ENCODE measurements at regions of chr1 and their contacts with region 1.

Region 1: DNA sequence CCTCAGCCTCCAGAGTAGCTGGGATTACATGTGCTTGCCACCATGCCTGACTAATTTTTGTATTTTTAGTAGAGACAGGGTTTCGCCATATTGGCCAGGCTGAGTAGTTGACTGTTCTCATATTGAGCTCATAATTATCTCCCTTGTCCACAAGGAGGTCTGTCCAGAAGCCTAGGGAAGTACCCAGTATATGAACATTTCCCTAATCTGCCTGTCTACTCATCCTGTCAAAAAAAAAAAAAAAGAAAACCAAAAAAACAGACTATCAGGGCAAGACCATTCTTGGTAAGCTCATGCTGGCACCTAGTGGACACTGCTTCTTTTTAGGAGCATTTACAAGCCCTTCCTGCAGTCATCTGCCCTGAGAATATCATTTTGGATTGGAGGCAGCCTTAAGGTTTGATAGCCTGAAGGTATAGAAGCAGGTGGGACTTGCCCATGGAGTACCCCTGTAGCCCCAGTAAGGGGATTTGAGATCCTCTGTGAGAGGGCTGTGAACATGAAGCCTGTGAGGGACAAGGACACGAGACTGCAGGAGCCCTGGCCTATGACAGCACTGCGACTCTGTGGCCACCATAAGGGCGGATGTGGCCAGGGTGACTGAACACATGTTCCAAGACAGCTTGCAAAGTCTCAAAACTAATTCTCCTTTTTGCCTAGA is 10.8 kb upstream of the DUSP12 start:
- DNase-seq: peak in 10 of 14 experiments; percentile 11 to 85 (median 33)
- ATAC-seq: peak; percentile 68
- H3K4me3 ChIP-seq: no peak overlapping the region
- H3K4me3 Mint-ChIP-seq: no peak overlapping the region
- H3K27ac ChIP-seq: no peak overlapping the region
- H3K27ac Mint-ChIP-seq: no peak overlapping the region
- H3K4me1 ChIP-seq: peaks cover 19% of the 10 kb centered on the region
- H3K4me1 Mint-ChIP-seq: peaks cover 20% of the 10 kb centered on the region
- H3K27me3 ChIP-seq: no peaks in the 10 kb centered on the region
- H3K27me3 Mint-ChIP-seq: peaks cover 22% of the 10 kb centered on the region
- CTCF ChIP-seq: peak; percentile 51

Region 2: GRCh38 chr1:161631076-161631475 is 107.7 kb before region 1 on chr1 and contains the start of gene FCGR3B:
- CTCF ChIA-PET with region 1: no interaction called
- POLR2A ChIA-PET with region 1: no interaction called
- intact Hi-C with region 1: no loop called
- DNase-seq: no peak
- ATAC-seq: no peak
- H3K4me3 ChIP-seq: no peak within 1 kb of the TSS
- H3K4me3 Mint-ChIP-seq: no peak within 1 kb of the TSS
- H3K27ac ChIP-seq: no peak within 1 kb of the TSS
- H3K27ac Mint-ChIP-seq: no peak within 1 kb of the TSS
- H3K4me1 ChIP-seq: peaks cover 6% of the 10 kb centered on the region
- H3K4me1 Mint-ChIP-seq: peaks cover 6% of the 10 kb centered on the region
- H3K27me3 ChIP-seq: no peaks in the 10 kb centered on the region
- H3K27me3 Mint-ChIP-seq: no peaks in the 10 kb centered on the region
- CTCF ChIP-seq: no peak
- total RNA-seq, gene FCGR3B: not detected

Region 3: DNA sequence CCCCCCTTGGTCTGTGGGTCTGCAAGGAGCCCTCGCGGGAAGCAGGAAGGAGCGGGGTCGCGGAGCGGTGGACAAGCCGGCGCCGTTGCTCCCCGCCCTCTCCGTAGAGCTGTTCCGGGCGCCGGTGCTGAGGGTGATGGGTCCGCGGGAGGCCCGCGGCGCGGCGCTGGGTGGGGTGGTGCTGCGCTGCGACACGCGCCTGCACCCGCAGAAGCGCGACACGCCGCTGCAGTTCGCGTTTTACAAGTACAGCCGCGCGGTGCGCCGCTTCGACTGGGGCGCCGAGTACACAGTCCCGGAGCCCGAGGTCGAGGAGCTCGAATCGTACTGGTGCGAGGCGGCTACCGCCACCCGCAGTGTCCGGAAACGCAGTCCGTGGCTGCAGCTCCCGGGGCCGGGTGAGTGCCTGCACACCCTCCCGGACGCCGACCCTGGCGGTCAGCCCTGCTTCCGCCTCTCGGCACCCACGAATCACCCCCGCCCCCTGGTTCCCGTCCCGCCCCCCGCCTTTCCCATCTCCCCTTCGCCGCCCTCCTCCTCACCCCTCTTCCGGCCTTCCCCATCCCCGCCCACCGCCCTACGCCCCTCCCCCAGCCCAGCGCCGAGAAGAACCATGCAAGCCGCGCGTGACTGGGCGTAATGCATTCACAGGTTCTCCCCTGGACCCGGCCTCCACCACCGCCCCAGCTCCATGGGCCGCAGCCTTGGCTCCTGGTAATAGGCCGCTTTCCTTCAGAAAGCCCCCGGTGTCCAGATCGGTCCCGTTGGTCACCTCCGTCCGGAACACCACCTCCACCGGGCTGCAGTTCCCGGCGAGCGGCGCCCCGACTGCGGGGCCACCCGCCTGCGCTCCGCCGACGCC is 11.9 kb before region 1 on chr1:
- CTCF ChIA-PET with region 1: interaction called, 11 read pairs
- POLR2A ChIA-PET with region 1: interaction called, 38 read pairs
- intact Hi-C with region 1: loop called in 1 of 2 experiments (anchors 2 kb)
- DNase-seq: peak; percentile 47 to 88 (median 67)
- ATAC-seq: peak; percentile 61
- H3K4me3 ChIP-seq: peak overlapping the region; percentile 80
- H3K4me3 Mint-ChIP-seq: peak overlapping the region; percentile 94
- H3K27ac ChIP-seq: peak overlapping the region; percentile 40 to 60
- H3K27ac Mint-ChIP-seq: peak overlapping the region; percentile 79
- H3K4me1 ChIP-seq: peaks cover 33% of the 10 kb centered on the region
- H3K4me1 Mint-ChIP-seq: peaks cover 37% of the 10 kb centered on the region
- H3K27me3 ChIP-seq: peaks cover 0 to 3% of the 10 kb centered on the region in 2 experiments
- H3K27me3 Mint-ChIP-seq: peaks cover 22% of the 10 kb centered on the region
- CTCF ChIP-seq: no peak

Region 4: DNA sequence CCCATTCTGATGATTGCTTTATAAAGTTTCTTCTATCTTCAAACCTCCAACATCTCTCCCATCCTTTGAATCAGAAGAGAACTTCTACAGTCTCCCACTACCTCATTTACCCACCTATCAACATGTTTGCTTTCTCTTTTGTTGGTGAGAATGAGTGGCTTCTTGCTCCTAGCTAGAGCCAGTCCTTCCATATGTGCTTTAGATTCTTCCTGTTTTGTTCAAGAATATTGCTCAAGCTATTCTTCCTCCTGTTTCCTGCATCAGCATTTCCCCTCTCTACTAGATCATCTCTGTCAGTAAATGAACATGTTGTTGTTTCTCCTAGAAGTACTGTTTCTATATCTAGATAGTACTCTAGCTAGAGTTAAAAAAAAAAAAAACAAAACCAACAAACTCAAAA is 33.6 kb after region 1 on chr1:
- CTCF ChIA-PET with region 1: no interaction called
- POLR2A ChIA-PET with region 1: no interaction called
- intact Hi-C with region 1: no loop called
- DNase-seq: peak in 2 of 14 experiments; percentile 19 to 26
- ATAC-seq: peak; percentile 37
- H3K4me3 ChIP-seq: peak overlapping the region; percentile 1
- H3K4me3 Mint-ChIP-seq: no peak overlapping the region
- H3K27ac ChIP-seq: peak overlapping the region; percentile 24 to 55
- H3K27ac Mint-ChIP-seq: no peak overlapping the region
- H3K4me1 ChIP-seq: peaks cover 54% of the 10 kb centered on the region
- H3K4me1 Mint-ChIP-seq: peaks cover 11% of the 10 kb centered on the region
- H3K27me3 ChIP-seq: no peaks in the 10 kb centered on the region
- H3K27me3 Mint-ChIP-seq: no peaks in the 10 kb centered on the region
- CTCF ChIP-seq: no peak

Region 5: GRCh38 chr1:161994175-161994668 is 255.5 kb after region 1 on chr1:
- CTCF ChIA-PET with region 1: no interaction called
- POLR2A ChIA-PET with region 1: no interaction called
- intact Hi-C with region 1: no loop called
- DNase-seq: no peak
- ATAC-seq: no peak
- H3K4me3 ChIP-seq: no peak overlapping the region
- H3K4me3 Mint-ChIP-seq: no peak overlapping the region
- H3K27ac ChIP-seq: no peak overlapping the region
- H3K27ac Mint-ChIP-seq: no peak overlapping the region
- H3K4me1 ChIP-seq: no peaks in the 10 kb centered on the region
- H3K4me1 Mint-ChIP-seq: no peaks in the 10 kb centered on the region
- H3K27me3 ChIP-seq: no peaks in the 10 kb centered on the region
- H3K27me3 Mint-ChIP-seq: no peaks in the 10 kb centered on the region
- CTCF ChIP-seq: no peak

Measured in CD4-positive, alpha-beta T cell (primary cell).